ENCODE measurements at regions of chr2 and their contacts with region 1.

Region 1: GRCh38 chr2:191555092-191555742 is 122.7 kb upstream of the NABP1 start:
- DNase-seq: peak; percentile 80
- H3K4me3 ChIP-seq: no peak overlapping the region
- H3K27ac ChIP-seq: no peak overlapping the region
- H3K4me1 ChIP-seq: peaks cover 8% of the 10 kb centered on the region
- H3K27me3 ChIP-seq: peaks cover 3 to 7% of the 10 kb centered on the region in 2 experiments
- CTCF ChIP-seq: peak; percentile 65 to 69
- POLR2A ChIP-seq: no peak

Region 2: GRCh38 chr2:191539068-191539467 is 16.1 kb before region 1 on chr2:
- CTCF ChIA-PET with region 1: interaction called, 32 read pairs
- POLR2A ChIA-PET with region 1: no interaction called
- dilution Hi-C with region 1: no loop called
- intact Hi-C with region 1: no loop called
- DNase-seq: peak; percentile 44
- H3K4me3 ChIP-seq: no peak overlapping the region
- H3K27ac ChIP-seq: no peak overlapping the region
- H3K4me1 ChIP-seq: no peaks in the 10 kb centered on the region
- H3K27me3 ChIP-seq: peaks cover 9% of the 10 kb centered on the region in 2 experiments
- CTCF ChIP-seq: peak; percentile 37 to 56
- POLR2A ChIP-seq: no peak

Region 3: GRCh38 chr2:191691016-191691735 is 136.0 kb after region 1 on chr2:
- CTCF ChIA-PET with region 1: interaction called, 23 read pairs
- POLR2A ChIA-PET with region 1: no interaction called
- dilution Hi-C with region 1: no loop called
- intact Hi-C with region 1: no loop called
- DNase-seq: peak; percentile 91
- H3K4me3 ChIP-seq: no peak overlapping the region
- H3K27ac ChIP-seq: peak overlapping the region; percentile 8
- H3K4me1 ChIP-seq: peaks cover 23% of the 10 kb centered on the region
- H3K27me3 ChIP-seq: no peaks in the 10 kb centered on the region
- CTCF ChIP-seq: peak; percentile 61 to 72
- POLR2A ChIP-seq: peak; percentile 71

Region 4: DNA sequence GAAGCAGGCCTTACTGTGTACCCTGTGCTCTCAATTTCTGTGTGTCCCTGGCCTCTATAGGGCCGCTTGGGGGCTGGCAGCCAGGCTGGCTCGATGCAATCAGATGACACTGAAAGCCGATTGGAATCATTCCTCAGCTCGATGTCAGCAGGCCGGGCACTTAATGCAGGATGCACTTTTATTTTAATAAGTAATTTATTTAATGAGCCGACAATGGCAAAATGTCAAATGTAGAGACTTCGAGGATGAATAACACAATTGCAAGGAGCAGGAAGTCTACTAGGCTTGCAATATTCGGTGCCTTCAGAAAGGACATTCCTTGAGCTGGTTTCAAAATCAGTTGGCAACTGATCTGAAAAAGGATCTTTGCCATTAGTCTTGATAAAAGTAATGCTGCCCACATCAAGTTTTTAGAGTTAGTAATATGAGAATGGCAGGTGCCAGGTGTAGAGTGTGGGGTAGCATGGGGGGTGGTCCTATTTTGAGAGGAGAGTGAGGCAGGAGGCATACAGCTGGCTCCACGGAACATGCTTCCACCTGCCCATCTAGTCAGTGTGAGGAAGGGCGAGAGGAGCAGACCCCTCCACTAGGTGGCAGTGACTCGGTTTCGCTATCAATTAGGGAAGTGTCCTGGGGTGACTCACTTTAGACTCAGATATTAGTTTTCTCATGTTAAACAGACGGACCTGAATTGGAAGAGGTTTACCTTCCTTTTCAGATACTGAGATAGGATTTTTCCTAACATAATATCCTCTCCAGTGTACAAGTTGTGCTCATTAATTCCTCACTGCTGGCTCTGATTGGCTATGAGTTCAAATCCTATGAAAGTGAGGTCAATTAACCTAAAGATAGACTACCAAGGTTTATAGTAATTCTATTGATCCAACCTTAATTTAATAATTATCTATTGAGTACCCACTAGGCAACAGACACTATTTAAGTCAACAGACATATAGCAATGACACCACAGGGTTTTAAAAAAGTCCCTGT is 203.6 kb after region 1 on chr2:
- CTCF ChIA-PET with region 1: interaction called, 8 read pairs
- POLR2A ChIA-PET with region 1: no interaction called
- dilution Hi-C with region 1: no loop called
- intact Hi-C with region 1: loop called (anchors 2 kb)
- DNase-seq: peak; percentile 66
- H3K4me3 ChIP-seq: no peak overlapping the region
- H3K27ac ChIP-seq: no peak overlapping the region
- H3K4me1 ChIP-seq: no peaks in the 10 kb centered on the region
- H3K27me3 ChIP-seq: peaks cover 10 to 14% of the 10 kb centered on the region in 2 experiments
- CTCF ChIP-seq: peak; percentile 79 to 81
- POLR2A ChIP-seq: no peak

Region 5: DNA sequence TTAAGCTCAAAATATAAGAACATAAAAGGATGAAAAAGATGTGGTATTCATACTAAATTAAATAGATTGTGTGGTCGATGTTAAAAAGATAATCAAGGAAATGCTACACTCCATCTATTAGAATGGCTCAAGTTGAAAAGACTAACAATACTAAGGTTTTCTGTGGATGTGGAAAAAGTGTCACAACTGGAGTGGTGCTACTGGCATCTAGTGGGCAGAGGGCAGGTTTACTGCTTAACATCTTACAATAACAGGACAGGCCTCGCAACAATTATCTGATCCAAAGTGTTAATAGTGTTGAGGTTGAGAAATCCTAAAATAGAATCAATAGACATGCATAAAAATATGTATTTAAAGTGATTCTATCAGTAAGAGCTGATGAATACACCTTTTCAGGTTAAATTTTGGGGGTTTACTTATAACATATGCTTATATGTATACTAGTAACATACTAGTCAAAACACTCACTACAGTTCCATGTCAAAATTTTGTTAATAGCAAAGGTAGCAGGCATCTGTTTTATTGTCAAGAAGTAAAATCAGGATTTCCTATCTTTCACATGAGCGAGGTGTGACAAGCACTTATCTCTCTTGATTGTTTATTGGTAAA is 731.0 kb after region 1 on chr2:
- CTCF ChIA-PET with region 1: no interaction called
- POLR2A ChIA-PET with region 1: no interaction called
- dilution Hi-C with region 1: no loop called
- intact Hi-C with region 1: loop called (anchors 5 kb)
- DNase-seq: peak; percentile 73
- H3K4me3 ChIP-seq: no peak overlapping the region
- H3K27ac ChIP-seq: no peak overlapping the region
- H3K4me1 ChIP-seq: no peaks in the 10 kb centered on the region
- H3K27me3 ChIP-seq: peaks cover 1 to 4% of the 10 kb centered on the region in 2 experiments
- CTCF ChIP-seq: peak; percentile 45 to 55
- POLR2A ChIP-seq: no peak